Heart left ventricle (tissue), 16 donors: ENCODE measurements at regions of chr2 and their contacts with region 1.

Region 1: GRCh38 chr2:33069894-33070651 is 123.3 kb downstream of the LTBP1 start:
- DNase-seq: peak in 2 of 5 donors; percentile 52 to 66
- ATAC-seq: peak; percentile 56 to 96 (median 85)
- H3K4me3 ChIP-seq: no peak overlapping the region
- H3K27ac ChIP-seq: peak overlapping the region in 6 of 12 donors; percentile 7 to 53 (median 34)
- H3K4me1 ChIP-seq: peaks cover 0 to 29% (median 12%) of the 10 kb centered on the region in 12 donors
- H3K27me3 ChIP-seq: no peaks in the 10 kb centered on the region
- CTCF ChIP-seq: no peak
- POLR2A ChIP-seq: no peak

Region 2: DNA sequence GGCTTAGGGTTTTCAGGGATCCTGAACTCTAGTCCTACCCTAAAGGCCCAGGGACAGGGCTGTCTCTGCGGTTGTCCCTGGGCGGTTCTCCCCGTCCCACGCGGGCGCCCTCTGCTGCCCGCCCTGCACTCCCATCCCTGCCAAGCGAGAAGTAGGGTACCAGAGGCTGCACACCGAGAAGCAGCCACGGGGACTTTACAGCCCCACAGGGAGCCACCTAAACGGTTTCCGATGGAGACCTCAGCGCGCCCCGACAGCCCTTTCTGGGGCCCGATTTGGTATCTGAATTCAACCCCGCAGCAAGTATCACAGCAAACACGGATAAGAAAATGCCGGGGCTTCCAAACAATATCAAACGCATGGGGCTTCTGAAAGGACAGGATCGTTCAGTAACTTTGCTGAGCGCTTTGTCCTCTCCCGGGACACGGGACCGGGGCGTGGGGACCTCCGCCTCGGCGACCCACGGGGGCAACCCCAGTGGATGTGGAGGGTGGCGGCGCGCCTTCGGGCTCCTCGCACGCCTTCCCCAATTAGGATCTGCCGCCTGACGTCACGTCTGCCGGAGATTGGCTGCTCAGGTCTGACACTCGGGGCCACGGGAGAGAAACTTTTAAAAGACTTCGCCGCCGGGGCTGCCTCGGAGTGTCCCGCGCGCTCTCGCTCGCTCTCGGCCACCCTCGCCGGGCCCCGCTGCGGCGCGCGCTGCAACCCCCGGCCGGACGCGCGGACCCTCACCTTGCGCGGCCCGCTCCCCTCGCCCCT is 123.6 kb before region 1 on chr2 and contains the start of gene LTBP1:
- intact Hi-C with region 1: no loop called
- DNase-seq: peak; percentile 85 to 92 (median 87)
- ATAC-seq: peak; percentile 84 to 93 (median 87)
- H3K4me3 ChIP-seq: peak within 1 kb of the TSS; percentile 56 to 94 (median 79)
- H3K27ac ChIP-seq: peak within 1 kb of the TSS; percentile 76 to 95 (median 91)
- H3K4me1 ChIP-seq: peaks cover 0 to 33% (median 7%) of the 10 kb centered on the region in 12 donors
- H3K27me3 ChIP-seq: peaks cover 0 to 24% (median 0%) of the 10 kb centered on the region in 9 donors
- CTCF ChIP-seq: peak; percentile 62 to 93 (median 78)
- POLR2A ChIP-seq: peak in 1 of 2 donors; percentile 80
- total RNA-seq, gene LTBP1: 63.4 to 150 (median 103) TPM

Region 3: GRCh38 chr2:33091541-33092123 is 21.6 kb after region 1 on chr2:
- intact Hi-C with region 1: loop called in 1 of 10 experiments (anchors 2 kb)
- DNase-seq: no peak
- ATAC-seq: peak; percentile 36 to 81 (median 64)
- H3K4me3 ChIP-seq: no peak overlapping the region
- H3K27ac ChIP-seq: peak overlapping the region in 9 of 12 donors; percentile 6 to 61 (median 30)
- H3K4me1 ChIP-seq: peaks cover 0 to 36% (median 15%) of the 10 kb centered on the region in 12 donors
- H3K27me3 ChIP-seq: no peaks in the 10 kb centered on the region
- CTCF ChIP-seq: no peak
- POLR2A ChIP-seq: no peak